CD8-positive, alpha-beta T cell (primary cell): ENCODE measurements at regions of chr7 and their contacts with region 1.

Region 1: DNA sequence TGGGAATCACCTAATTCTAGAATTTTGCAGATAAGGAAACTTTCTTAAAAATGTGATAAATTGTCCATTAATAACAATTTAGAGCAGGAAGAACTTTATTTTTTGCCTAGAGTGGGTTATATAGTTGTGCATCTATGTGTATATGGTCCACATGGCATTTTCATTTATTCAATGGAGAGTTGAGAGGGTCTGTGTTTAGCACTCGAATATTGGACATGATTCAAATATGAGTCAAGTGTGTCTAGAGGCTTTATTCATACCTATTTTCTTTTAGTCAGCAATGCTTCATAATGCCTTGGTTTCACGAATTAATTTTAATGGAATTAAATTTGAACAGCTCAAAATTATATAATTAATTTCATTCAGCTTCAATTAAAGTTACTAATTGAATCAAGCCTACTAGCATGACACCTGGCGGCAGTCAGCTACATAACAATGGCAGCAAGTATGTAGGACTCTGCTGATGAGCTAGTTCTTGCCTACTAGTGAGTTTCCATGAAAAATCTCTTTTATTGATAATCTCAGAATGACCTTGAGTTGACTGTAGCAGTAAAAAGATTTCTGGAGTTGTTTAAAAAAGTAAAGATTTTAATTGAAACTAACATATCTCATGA is 17.7 kb downstream of the MDFIC start:
- DNase-seq: peak in 4 of 9 experiments; percentile 10 to 52 (median 31)
- ATAC-seq: peak; percentile 42
- H3K4me3 ChIP-seq: no peak overlapping the region
- H3K4me3 Mint-ChIP-seq: no peak overlapping the region
- H3K27ac ChIP-seq: no peak overlapping the region
- H3K27ac Mint-ChIP-seq: no peak overlapping the region
- H3K4me1 ChIP-seq: peaks cover 11% of the 10 kb centered on the region
- H3K4me1 Mint-ChIP-seq: peaks cover 60% of the 10 kb centered on the region
- H3K27me3 ChIP-seq: no peaks in the 10 kb centered on the region
- H3K27me3 Mint-ChIP-seq: no peaks in the 10 kb centered on the region
- CTCF ChIP-seq: no peak

Region 2: DNA sequence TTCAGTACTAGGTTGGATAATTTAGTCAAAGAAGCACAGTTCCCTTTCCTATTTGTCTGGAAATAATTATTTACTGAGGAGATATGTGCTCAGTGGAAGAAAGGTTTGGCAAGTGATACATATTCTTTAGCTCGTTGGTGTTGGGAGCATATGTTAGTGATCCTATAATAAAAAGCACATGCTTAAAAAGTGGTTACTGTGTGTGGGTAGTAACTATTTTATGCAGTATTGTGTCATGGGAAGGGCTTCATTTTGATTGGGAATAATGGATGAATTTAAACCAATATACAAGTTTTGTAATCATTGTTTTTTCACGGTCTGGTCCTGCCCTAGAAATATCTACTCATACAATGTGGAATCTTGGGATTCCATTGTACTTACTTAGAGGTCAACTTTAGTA is 832.1 kb before region 1 on chr7:
- CTCF ChIA-PET with region 1: no interaction called
- POLR2A ChIA-PET with region 1: no interaction called
- intact Hi-C with region 1: no loop called
- DNase-seq: no peak
- ATAC-seq: no peak
- H3K4me3 ChIP-seq: no peak overlapping the region
- H3K4me3 Mint-ChIP-seq: no peak overlapping the region
- H3K27ac ChIP-seq: no peak overlapping the region
- H3K27ac Mint-ChIP-seq: no peak overlapping the region
- H3K4me1 ChIP-seq: no peaks in the 10 kb centered on the region
- H3K4me1 Mint-ChIP-seq: no peaks in the 10 kb centered on the region
- H3K27me3 ChIP-seq: no peaks in the 10 kb centered on the region
- H3K27me3 Mint-ChIP-seq: peaks cover 2% of the 10 kb centered on the region
- CTCF ChIP-seq: no peak

Region 3: GRCh38 chr7:114901781-114902180 is 37.8 kb before region 1 on chr7:
- CTCF ChIA-PET with region 1: no interaction called
- POLR2A ChIA-PET with region 1: no interaction called
- intact Hi-C with region 1: loop called in 1 of 2 experiments (anchors 5 kb)
- DNase-seq: no peak
- ATAC-seq: no peak
- H3K4me3 ChIP-seq: no peak overlapping the region
- H3K4me3 Mint-ChIP-seq: no peak overlapping the region
- H3K27ac ChIP-seq: no peak overlapping the region
- H3K27ac Mint-ChIP-seq: no peak overlapping the region
- H3K4me1 ChIP-seq: no peaks in the 10 kb centered on the region
- H3K4me1 Mint-ChIP-seq: no peaks in the 10 kb centered on the region
- H3K27me3 ChIP-seq: no peaks in the 10 kb centered on the region
- H3K27me3 Mint-ChIP-seq: no peaks in the 10 kb centered on the region
- CTCF ChIP-seq: no peak

Region 4: DNA sequence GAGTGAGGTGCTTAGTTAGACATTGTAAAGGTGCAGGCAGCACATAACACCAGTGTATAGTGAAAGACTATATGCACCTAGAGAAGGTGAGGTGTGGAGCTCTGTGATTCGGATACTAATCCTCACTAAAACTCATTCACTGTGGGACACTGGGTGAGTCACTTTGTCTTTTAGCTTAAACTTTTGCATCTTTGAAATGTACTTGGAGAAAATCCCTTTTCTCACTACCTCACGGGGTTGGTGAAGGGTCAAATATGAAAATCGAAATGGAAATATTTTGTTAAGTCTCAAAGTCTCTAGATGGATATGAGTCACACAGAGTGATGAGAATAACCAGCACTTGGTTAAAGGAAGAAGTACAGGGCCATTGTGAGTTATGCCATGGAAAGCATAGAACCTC is 20.3 kb after region 1 on chr7:
- CTCF ChIA-PET with region 1: no interaction called
- POLR2A ChIA-PET with region 1: no interaction called
- intact Hi-C with region 1: loop called in 1 of 2 experiments (anchors 2 kb)
- DNase-seq: no peak
- ATAC-seq: no peak
- H3K4me3 ChIP-seq: no peak overlapping the region
- H3K4me3 Mint-ChIP-seq: no peak overlapping the region
- H3K27ac ChIP-seq: no peak overlapping the region
- H3K27ac Mint-ChIP-seq: peak overlapping the region; percentile 28
- H3K4me1 ChIP-seq: no peaks in the 10 kb centered on the region
- H3K4me1 Mint-ChIP-seq: peaks cover 61% of the 10 kb centered on the region
- H3K27me3 ChIP-seq: no peaks in the 10 kb centered on the region
- H3K27me3 Mint-ChIP-seq: no peaks in the 10 kb centered on the region
- CTCF ChIP-seq: no peak

Region 5: GRCh38 chr7:114973147-114973546 is 33.6 kb after region 1 on chr7:
- CTCF ChIA-PET with region 1: no interaction called
- POLR2A ChIA-PET with region 1: interaction called, 3 read pairs
- intact Hi-C with region 1: loop called in 1 of 2 experiments (anchors 5 kb)
- DNase-seq: no peak
- ATAC-seq: no peak
- H3K4me3 ChIP-seq: no peak overlapping the region
- H3K4me3 Mint-ChIP-seq: no peak overlapping the region
- H3K27ac ChIP-seq: no peak overlapping the region
- H3K27ac Mint-ChIP-seq: no peak overlapping the region
- H3K4me1 ChIP-seq: peaks cover 17% of the 10 kb centered on the region
- H3K4me1 Mint-ChIP-seq: peaks cover 75% of the 10 kb centered on the region
- H3K27me3 ChIP-seq: no peaks in the 10 kb centered on the region
- H3K27me3 Mint-ChIP-seq: no peaks in the 10 kb centered on the region
- CTCF ChIP-seq: no peak

Region 6: DNA sequence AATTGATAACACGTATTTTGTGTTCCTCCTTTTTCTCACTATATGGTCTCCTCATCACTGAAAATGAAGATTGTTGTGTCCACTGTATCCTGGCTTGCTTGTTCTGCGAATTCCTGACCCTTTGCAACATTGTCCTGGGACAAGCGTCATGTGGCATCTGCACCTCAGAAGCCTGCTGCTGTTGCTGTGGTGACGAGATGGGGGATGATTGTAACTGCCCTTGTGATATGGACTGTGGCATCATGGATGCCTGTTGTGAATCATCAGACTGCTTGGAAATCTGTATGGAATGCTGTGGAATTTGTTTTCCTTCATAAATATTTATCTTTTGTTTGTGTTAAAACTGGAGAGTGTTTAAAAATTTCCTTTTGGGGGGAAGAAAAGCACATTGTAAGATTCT is 76.0 kb after region 1 on chr7:
- CTCF ChIA-PET with region 1: no interaction called
- POLR2A ChIA-PET with region 1: no interaction called
- intact Hi-C with region 1: no loop called
- DNase-seq: no peak
- ATAC-seq: no peak
- H3K4me3 ChIP-seq: no peak overlapping the region
- H3K4me3 Mint-ChIP-seq: no peak overlapping the region
- H3K27ac ChIP-seq: no peak overlapping the region
- H3K27ac Mint-ChIP-seq: no peak overlapping the region
- H3K4me1 ChIP-seq: peaks cover 9% of the 10 kb centered on the region
- H3K4me1 Mint-ChIP-seq: peaks cover 39% of the 10 kb centered on the region
- H3K27me3 ChIP-seq: no peaks in the 10 kb centered on the region
- H3K27me3 Mint-ChIP-seq: no peaks in the 10 kb centered on the region
- CTCF ChIP-seq: no peak